Body of pancreas (tissue), 4 donors: ENCODE measurements at regions of chr18 and their contacts with region 1.

Region 1: DNA sequence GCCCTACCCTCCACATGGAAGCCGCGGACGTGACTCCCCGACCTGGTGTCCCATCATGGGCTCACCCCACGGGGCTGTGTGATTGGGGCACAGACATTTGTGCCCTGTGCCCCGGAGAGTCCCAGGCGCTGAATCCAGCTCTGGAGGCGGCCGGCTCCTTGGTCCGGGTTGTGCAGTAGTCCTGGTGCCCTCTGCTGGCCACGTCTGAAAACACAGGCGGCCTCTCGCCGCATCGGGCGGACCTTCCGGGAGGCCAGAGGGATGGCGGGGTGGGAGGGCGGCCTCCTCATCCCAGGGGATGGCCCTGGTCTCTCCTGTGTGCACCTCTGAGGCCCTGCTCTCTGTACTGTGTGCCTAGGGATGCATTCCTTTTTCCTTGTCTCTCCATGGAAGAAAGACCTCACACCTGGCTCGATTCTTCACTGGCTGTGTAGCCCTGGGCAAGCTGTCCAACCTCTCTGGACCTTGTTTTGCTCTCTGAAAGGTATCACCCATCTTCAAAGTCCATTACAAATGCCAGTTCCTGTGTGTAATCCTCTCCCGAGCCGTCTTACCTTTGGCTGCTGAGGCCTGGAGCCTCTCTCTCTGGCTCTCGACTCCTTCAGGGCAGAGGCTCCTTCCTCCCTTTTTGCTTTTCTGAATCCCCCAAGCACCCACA is 27.6 kb downstream of the CELF4 start:
- DNase-seq: peak; percentile 75 to 83 (median 76)
- ATAC-seq: peak; percentile 86
- H3K4me3 ChIP-seq: no peak overlapping the region
- H3K27ac ChIP-seq: no peak overlapping the region
- H3K4me1 ChIP-seq: no peaks in the 10 kb centered on the region
- H3K27me3 ChIP-seq: peaks cover 0 to 7% of the 10 kb centered on the region in 2 donors
- CTCF ChIP-seq: peak; percentile 71 to 85 (median 80)
- POLR2A ChIP-seq: no peak

Region 2: DNA sequence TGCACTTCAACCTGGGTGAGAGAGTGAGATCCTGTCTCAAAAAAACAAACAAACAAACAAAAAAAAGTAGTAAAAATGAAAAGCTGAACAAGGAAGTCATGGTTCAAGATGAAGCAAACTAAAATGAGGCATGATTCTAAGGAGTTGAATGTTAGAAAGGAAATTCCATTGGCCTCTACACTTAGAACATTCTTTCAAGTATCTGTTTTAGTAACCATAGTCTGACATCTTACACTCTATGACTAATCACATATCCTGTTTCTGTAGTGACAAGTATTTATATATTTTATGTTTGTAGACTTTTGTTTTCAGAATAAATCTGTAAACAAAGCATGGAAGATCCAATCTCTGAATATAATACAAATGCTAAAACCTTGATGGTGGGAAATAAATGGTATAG is 544.9 kb before region 1 on chr18:
- intact Hi-C with region 1: no loop called
- DNase-seq: no peak
- ATAC-seq: no peak
- H3K4me3 ChIP-seq: no peak overlapping the region
- H3K27ac ChIP-seq: no peak overlapping the region
- H3K4me1 ChIP-seq: no peaks in the 10 kb centered on the region
- H3K27me3 ChIP-seq: no peaks in the 10 kb centered on the region
- CTCF ChIP-seq: no peak
- POLR2A ChIP-seq: no peak

Region 3: DNA sequence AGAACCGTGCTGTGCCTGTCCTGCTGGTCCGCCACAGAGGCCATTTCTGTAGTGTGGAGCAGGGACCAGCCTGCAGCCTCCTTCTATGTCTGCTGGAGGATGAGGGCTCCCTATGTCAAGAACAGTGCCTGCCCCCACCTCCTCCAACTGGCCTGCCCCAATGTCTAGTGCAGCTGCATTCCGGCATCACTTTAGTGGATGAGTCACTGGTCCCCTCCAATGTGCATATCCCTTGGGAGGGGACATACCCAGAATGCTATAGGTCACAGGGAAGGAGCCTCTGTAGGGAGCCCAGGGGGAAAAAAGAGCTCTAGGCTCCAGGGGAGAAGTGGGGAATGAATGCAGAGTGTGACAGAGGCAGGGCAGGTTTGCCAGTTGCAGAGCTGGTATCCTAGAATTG is 191.9 kb before region 1 on chr18:
- intact Hi-C with region 1: loop called (anchors 10 kb)
- DNase-seq: no peak
- ATAC-seq: no peak
- H3K4me3 ChIP-seq: no peak overlapping the region
- H3K27ac ChIP-seq: no peak overlapping the region
- H3K4me1 ChIP-seq: no peaks in the 10 kb centered on the region
- H3K27me3 ChIP-seq: no peaks in the 10 kb centered on the region
- CTCF ChIP-seq: no peak
- POLR2A ChIP-seq: no peak

Region 4: GRCh38 chr18:37493352-37493935 is 44.6 kb before region 1 on chr18:
- intact Hi-C with region 1: no loop called
- DNase-seq: no peak
- ATAC-seq: no peak
- H3K4me3 ChIP-seq: no peak overlapping the region
- H3K27ac ChIP-seq: no peak overlapping the region
- H3K4me1 ChIP-seq: no peaks in the 10 kb centered on the region
- H3K27me3 ChIP-seq: no peaks in the 10 kb centered on the region
- CTCF ChIP-seq: no peak
- POLR2A ChIP-seq: no peak